Stomach (tissue), 19 donors: ENCODE measurements at regions of chr3 and their contacts with region 1.

Region 1: DNA sequence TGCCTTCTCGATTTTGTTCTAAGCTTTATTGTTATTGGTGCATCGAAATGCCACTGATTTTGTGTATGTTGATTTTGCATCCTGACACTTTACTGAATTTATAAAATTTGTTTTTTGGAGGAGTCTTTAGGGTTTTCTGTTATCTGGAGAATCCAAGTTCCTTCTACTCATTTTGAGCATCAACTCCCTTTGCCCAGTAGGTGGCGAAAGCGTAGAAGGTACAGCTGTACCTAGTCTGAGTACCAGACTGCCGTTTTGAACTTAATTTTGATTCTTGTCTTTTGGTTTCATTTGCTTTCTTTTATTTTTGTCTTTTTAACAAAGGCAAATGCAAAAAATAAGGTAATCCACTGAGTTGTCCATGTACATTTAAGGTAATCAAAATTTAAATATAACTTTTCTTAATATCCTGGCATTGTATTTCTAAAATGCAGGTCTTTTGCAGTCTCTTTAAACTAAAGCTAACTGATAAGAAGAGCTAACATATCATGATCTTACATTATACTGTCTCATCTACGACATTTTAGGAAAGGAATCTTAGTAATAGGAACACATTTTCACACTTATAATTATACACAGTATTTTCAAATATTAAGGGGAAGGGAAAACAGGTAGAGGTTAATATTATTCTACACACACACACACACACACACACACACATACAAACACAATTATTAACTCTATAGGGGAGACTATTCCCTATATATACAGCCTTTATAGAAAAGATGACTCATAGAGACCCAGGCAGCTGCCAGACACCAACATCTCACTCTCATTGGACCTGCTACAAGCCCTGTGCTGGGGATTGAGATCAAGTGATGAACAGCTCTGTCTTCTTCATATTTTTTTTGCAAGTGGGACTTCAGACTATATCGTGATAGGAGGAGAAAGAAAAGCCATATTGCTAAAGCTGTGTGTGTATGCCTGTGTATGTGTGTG is 71.7 kb downstream of the SYNPR start:
- DNase-seq: peak; percentile 53 to 85
- H3K4me3 ChIP-seq: no peak overlapping the region
- H3K27ac ChIP-seq: no peak overlapping the region
- H3K4me1 ChIP-seq: no peaks in the 10 kb centered on the region
- H3K27me3 ChIP-seq: peaks cover 0 to 26% (median 0%) of the 10 kb centered on the region in 3 donors
- CTCF ChIP-seq: peak in 5 of 7 experiments; percentile 44 to 62 (median 54)
- EP300 ChIP-seq: no peak
- POLR2A ChIP-seq: no peak

Region 2: GRCh38 chr3:63818281-63819150 is 468.7 kb after region 1 on chr3:
- intact Hi-C with region 1: loop called (anchors 5 kb)
- DNase-seq: peak; percentile 70 to 84
- H3K4me3 ChIP-seq: no peak overlapping the region
- H3K27ac ChIP-seq: no peak overlapping the region
- H3K4me1 ChIP-seq: peaks cover 0 to 7% (median 2%) of the 10 kb centered on the region in 4 donors
- H3K27me3 ChIP-seq: no peaks in the 10 kb centered on the region
- CTCF ChIP-seq: peak in 6 of 7 experiments; percentile 27 to 82 (median 80)
- EP300 ChIP-seq: no peak
- POLR2A ChIP-seq: no peak